ENCODE measurements at regions of chr4 and their contacts with region 1.

Region 1: GRCh38 chr4:90419124-90419711 is 292.0 kb downstream of the CCSER1 start:
- DNase-seq: no peak
- H3K4me3 Mint-ChIP-seq: no peak overlapping the region
- H3K27ac Mint-ChIP-seq: no peak overlapping the region
- H3K4me1 Mint-ChIP-seq: no peaks in the 10 kb centered on the region
- H3K27me3 Mint-ChIP-seq: no peaks in the 10 kb centered on the region
- CTCF ChIP-seq: peak; percentile 30

Region 2: DNA sequence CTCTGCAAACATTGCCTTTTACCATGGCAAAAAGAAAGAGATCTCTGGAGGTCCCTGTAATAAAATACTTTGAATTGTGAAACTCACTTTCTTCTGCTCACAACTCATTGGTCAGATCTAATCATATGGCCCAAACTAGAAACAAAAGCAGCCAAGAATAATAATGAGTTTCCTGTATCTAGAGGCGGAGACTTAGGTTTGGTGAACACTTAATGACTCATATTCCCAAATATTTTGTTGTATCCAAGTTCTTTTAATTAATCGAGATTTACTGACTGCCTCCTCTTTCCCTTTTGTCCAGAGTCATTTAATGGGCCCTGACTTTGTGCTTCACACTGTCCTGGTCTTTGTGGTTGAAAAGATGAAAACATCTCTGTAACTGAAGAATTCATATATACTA is 101.4 kb before region 1 on chr4:
- CTCF ChIA-PET with region 1: no interaction called
- intact Hi-C with region 1: loop called (anchors 5 kb)
- DNase-seq: no peak
- H3K4me3 Mint-ChIP-seq: no peak overlapping the region
- H3K27ac Mint-ChIP-seq: no peak overlapping the region
- H3K4me1 Mint-ChIP-seq: no peaks in the 10 kb centered on the region
- H3K27me3 Mint-ChIP-seq: no peaks in the 10 kb centered on the region
- CTCF ChIP-seq: no peak

Region 3: DNA sequence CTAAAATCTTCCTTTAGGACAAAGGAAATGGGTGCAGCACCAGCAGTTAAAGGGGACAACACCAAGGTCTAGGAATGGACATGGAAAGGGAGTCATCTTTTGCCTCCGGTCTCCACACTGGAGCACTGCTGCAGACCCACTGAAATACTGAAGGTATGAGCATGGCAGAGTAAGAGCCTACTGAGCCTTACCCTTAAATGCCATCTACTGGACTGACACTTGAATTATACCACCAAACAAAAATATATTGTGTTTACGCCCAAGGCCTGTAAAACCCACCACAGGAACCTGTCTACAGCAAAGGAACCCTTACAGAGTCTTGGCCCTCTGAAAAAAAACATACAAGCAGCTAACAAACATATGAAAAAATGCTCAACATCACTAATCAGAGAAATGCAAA is 151.4 kb after region 1 on chr4:
- CTCF ChIA-PET with region 1: no interaction called
- intact Hi-C with region 1: loop called (anchors 1 kb)
- DNase-seq: no peak
- H3K4me3 Mint-ChIP-seq: no peak overlapping the region
- H3K27ac Mint-ChIP-seq: no peak overlapping the region
- H3K4me1 Mint-ChIP-seq: no peaks in the 10 kb centered on the region
- H3K27me3 Mint-ChIP-seq: no peaks in the 10 kb centered on the region
- CTCF ChIP-seq: no peak

Region 4: DNA sequence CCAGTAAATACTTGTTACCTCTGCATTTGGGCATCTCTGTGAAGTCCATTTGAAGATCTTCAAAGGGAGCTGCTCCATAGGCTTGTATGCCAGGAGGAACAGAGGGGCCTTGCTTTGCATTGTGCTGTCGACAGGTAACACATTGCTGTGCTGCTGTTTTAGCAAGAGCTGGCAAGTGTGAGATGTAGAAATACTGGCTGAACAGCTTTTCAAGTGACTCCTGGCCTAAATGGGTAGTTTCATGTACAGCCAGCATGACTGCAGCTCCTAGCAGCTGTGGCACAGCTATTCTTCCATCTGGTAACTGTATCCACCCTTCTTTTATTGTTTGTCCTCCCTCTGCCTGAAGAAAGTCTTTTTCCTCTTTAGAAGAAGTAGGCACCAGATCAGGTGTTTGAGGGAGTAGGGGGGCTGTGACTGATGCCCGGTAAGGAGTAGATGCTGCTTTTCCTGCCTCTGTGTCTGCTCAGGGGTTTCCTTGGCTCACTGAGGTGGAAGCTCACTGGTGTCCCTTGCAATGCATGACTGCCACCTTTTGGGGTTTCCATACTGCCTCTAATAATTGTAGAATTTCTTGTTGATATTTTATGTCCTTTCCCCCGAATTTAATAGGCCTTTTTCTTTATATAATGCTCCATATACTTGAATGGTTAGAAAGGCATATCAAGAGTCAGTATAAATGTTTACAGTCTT is 673.3 kb after region 1 on chr4:
- CTCF ChIA-PET with region 1: interaction called, 21 read pairs
- intact Hi-C with region 1: loop called (anchors 1 kb)
- DNase-seq: peak; percentile 23
- H3K4me3 Mint-ChIP-seq: no peak overlapping the region
- H3K27ac Mint-ChIP-seq: no peak overlapping the region
- H3K4me1 Mint-ChIP-seq: no peaks in the 10 kb centered on the region
- H3K27me3 Mint-ChIP-seq: no peaks in the 10 kb centered on the region
- CTCF ChIP-seq: no peak

Region 5: GRCh38 chr4:91113130-91113706 is 694.0 kb after region 1 on chr4:
- CTCF ChIA-PET with region 1: interaction called, 6 read pairs
- intact Hi-C with region 1: loop called (anchors 2 kb)
- DNase-seq: no peak
- H3K4me3 Mint-ChIP-seq: no peak overlapping the region
- H3K27ac Mint-ChIP-seq: no peak overlapping the region
- H3K4me1 Mint-ChIP-seq: no peaks in the 10 kb centered on the region
- H3K27me3 Mint-ChIP-seq: no peaks in the 10 kb centered on the region
- CTCF ChIP-seq: peak; percentile 39

Region 6: DNA sequence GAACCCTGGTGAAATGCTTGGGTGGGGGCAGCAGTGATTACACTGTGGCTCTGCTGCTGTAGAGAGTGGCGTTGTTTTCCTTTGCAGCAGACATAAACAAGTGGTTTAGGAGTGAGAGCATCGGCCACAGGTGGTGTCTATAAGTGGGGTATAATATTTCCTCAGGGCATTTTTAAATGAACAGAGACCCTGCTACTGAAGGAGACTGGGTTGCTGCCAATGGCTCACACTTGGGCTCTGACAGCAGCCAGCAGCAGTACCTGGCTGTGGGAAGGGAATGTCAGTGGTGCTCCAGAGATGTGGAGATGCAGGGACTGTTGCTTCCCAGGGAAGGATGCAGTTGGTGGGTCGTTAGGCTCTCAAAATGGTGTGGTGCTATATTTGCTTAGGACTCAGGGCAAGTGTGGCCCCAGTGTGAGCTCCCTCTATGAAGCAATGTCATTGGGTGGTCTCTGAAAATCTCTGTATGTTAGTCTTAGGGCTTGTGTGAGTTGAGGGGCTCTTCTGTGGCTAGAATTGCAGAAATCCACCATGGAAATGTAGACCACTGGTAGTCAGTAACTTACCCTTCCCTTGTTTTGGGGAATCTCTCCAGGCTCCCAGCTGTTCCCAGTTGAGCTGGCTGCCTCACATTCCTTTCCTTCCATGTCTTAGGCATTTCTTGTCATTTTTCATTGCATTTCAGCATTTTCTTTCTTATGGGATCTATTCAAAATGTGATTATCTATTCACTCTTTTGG is 861.5 kb after region 1 on chr4:
- CTCF ChIA-PET with region 1: no interaction called
- intact Hi-C with region 1: no loop called
- DNase-seq: no peak
- H3K4me3 Mint-ChIP-seq: no peak overlapping the region
- H3K27ac Mint-ChIP-seq: no peak overlapping the region
- H3K4me1 Mint-ChIP-seq: no peaks in the 10 kb centered on the region
- H3K27me3 Mint-ChIP-seq: no peaks in the 10 kb centered on the region
- CTCF ChIP-seq: no peak

Region 7: DNA sequence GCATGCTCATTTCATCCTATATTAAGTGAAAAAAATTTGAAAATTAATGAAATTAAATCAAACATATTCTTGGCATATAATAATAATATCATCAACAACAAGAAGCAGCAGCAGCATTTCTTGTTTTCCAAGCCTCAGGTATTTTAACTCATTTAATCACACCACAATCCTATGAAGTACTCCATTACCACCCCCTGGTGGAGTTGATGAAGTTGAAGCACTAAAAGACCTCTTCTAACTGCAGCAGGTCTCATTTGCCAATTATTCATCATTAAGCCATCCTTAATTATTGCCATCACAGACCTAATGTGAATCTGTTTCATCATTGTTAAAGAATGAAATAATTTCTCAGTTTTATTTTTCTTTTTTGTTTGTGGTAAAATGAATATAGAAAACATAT is 1083.1 kb after region 1 on chr4:
- CTCF ChIA-PET with region 1: no interaction called
- intact Hi-C with region 1: loop called (anchors 1 kb)
- DNase-seq: peak; percentile 19
- H3K4me3 Mint-ChIP-seq: no peak overlapping the region
- H3K27ac Mint-ChIP-seq: no peak overlapping the region
- H3K4me1 Mint-ChIP-seq: no peaks in the 10 kb centered on the region
- H3K27me3 Mint-ChIP-seq: no peaks in the 10 kb centered on the region
- CTCF ChIP-seq: peak; percentile 31